ENCODE measurements at regions of chr7 and their contacts with region 1.

Region 1: DNA sequence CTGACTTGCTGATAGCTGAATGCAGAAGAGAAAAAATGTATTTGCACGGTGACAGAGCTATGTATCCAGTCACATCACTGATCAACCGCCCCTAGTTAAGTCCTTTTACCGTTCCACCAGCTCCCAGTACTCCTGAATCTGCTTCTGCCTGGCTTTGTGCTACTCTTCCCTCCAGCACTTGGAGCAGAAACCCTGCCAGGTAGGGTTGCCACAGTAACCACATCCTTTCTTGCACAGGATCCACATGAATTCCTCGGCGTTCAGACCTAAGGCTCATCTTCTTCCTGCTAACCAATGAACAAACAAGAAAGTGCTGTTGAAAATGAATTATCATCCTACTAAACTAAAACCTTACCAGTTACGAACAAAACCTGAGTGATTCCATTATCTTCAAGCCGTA is 52.0 kb upstream of the KCTD7 start:
- DNase-seq: no peak
- H3K4me3 ChIP-seq: no peak overlapping the region
- H3K27ac ChIP-seq: no peak overlapping the region
- H3K4me1 ChIP-seq: no peaks in the 10 kb centered on the region
- H3K27me3 ChIP-seq: no peaks in the 10 kb centered on the region
- CTCF ChIP-seq: no peak
- EP300 ChIP-seq: no peak
- POLR2A ChIP-seq: no peak

Region 2: DNA sequence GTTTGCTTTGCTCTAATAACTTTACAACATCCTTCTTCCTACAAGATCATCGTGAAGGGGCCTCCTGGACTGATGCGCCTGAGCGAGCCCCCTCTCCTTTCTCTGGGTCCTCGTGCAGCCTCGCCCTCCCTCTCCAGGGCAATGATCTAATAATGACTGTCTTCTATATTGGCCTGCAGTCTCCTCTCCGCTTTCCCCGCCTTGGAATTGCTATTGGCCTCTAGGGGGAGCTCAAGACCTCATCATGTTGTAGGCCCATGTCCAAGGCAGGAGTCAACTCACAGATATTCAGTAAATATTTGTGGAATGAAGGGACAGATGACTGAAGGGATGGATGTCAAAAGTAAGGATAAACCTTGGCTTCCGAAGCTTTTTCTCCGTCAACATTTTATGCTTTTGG is 1600.3 kb after region 1 on chr7:
- intact Hi-C with region 1: loop called in 1 of 4 experiments (anchors 10 kb)
- DNase-seq: peak in 4 of 5 donors; percentile 13 to 25 (median 20)
- H3K4me3 ChIP-seq: no peak overlapping the region
- H3K27ac ChIP-seq: no peak overlapping the region
- H3K4me1 ChIP-seq: peaks cover 2% of the 10 kb centered on the region
- H3K27me3 ChIP-seq: no peaks in the 10 kb centered on the region
- CTCF ChIP-seq: peak in 2 of 3 donors; percentile 19 to 31
- EP300 ChIP-seq: no peak
- POLR2A ChIP-seq: no peak

Measured in ovary (tissue), 10 donors.